CD4-positive, alpha-beta T cell (primary cell): ENCODE measurements at regions of chr7 and their contacts with region 1.

Region 1: GRCh38 chr7:92461027-92462003 is 14.0 kb downstream of the GATAD1 start:
- DNase-seq: peak in 11 of 14 experiments; percentile 1 to 58 (median 11)
- ATAC-seq: peak; percentile 63
- H3K4me3 ChIP-seq: no peak overlapping the region
- H3K4me3 Mint-ChIP-seq: no peak overlapping the region
- H3K27ac ChIP-seq: no peak overlapping the region
- H3K27ac Mint-ChIP-seq: no peak overlapping the region
- H3K4me1 ChIP-seq: no peaks in the 10 kb centered on the region
- H3K4me1 Mint-ChIP-seq: no peaks in the 10 kb centered on the region
- H3K27me3 ChIP-seq: no peaks in the 10 kb centered on the region
- H3K27me3 Mint-ChIP-seq: no peaks in the 10 kb centered on the region
- CTCF ChIP-seq: peak; percentile 79

Region 2: GRCh38 chr7:90804370-90804769 is 1656.9 kb before region 1 on chr7:
- CTCF ChIA-PET with region 1: no interaction called
- POLR2A ChIA-PET with region 1: no interaction called
- intact Hi-C with region 1: no loop called
- DNase-seq: no peak
- ATAC-seq: no peak
- H3K4me3 ChIP-seq: no peak overlapping the region
- H3K4me3 Mint-ChIP-seq: no peak overlapping the region
- H3K27ac ChIP-seq: no peak overlapping the region
- H3K27ac Mint-ChIP-seq: no peak overlapping the region
- H3K4me1 ChIP-seq: no peaks in the 10 kb centered on the region
- H3K4me1 Mint-ChIP-seq: no peaks in the 10 kb centered on the region
- H3K27me3 ChIP-seq: no peaks in the 10 kb centered on the region
- H3K27me3 Mint-ChIP-seq: no peaks in the 10 kb centered on the region
- CTCF ChIP-seq: no peak

Region 3: DNA sequence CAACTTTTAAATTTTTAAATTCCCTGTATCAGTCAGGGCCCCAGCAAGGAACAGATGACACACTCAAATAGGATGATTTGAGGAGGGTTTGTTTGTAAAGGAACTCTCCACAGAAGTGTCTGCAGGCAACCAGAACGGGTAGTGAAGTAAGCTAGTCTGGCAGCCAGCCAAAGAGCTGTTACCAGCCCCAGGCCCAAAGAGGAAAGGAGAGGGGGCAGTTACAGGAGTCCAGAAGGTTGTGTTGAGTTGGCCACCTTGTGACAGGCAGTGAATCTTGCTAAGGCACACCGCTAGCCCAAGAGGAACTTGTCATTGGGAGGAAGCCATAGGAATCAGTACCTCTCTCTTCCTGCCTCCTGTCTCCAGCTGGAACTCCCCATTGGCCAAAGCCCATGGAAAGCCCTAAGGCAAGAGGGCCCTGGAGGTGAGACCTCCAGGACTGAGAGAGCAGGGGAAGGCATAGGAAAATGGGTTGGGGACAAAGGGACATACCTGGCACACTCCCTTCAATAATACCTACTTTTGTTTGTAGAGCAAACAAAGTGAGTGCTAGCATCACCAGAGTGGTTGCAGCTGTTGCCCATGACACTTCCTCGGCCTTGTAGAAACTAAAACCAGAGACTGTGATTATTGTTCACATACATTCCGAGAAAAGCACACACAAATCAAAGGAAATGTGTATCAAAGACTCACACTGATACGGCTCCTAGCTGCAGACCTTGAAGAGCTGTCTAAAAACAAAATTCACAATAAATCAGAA is 39.5 kb before region 1 on chr7:
- CTCF ChIA-PET with region 1: interaction called, 6 read pairs
- POLR2A ChIA-PET with region 1: no interaction called
- intact Hi-C with region 1: loop called (anchors 5 kb)
- DNase-seq: no peak
- ATAC-seq: no peak
- H3K4me3 ChIP-seq: no peak overlapping the region
- H3K4me3 Mint-ChIP-seq: no peak overlapping the region
- H3K27ac ChIP-seq: no peak overlapping the region
- H3K27ac Mint-ChIP-seq: no peak overlapping the region
- H3K4me1 ChIP-seq: peaks cover 11% of the 10 kb centered on the region
- H3K4me1 Mint-ChIP-seq: peaks cover 12% of the 10 kb centered on the region
- H3K27me3 ChIP-seq: peaks cover 2 to 11% of the 10 kb centered on the region in 2 experiments
- H3K27me3 Mint-ChIP-seq: peaks cover 12% of the 10 kb centered on the region
- CTCF ChIP-seq: no peak

Region 4: GRCh38 chr7:93086748-93087147 is 625.4 kb after region 1 on chr7:
- CTCF ChIA-PET with region 1: no interaction called
- POLR2A ChIA-PET with region 1: no interaction called
- intact Hi-C with region 1: no loop called
- DNase-seq: no peak
- ATAC-seq: no peak
- H3K4me3 ChIP-seq: no peak overlapping the region
- H3K4me3 Mint-ChIP-seq: no peak overlapping the region
- H3K27ac ChIP-seq: no peak overlapping the region
- H3K27ac Mint-ChIP-seq: no peak overlapping the region
- H3K4me1 ChIP-seq: no peaks in the 10 kb centered on the region
- H3K4me1 Mint-ChIP-seq: no peaks in the 10 kb centered on the region
- H3K27me3 ChIP-seq: no peaks in the 10 kb centered on the region
- H3K27me3 Mint-ChIP-seq: peaks cover 24% of the 10 kb centered on the region
- CTCF ChIP-seq: no peak